Activated CD4-positive, alpha-beta memory T cell treated with anti-CD3 and anti-CD28 coated beads, Interleukin-2, amount 10 ng/mL, durations not matched to agents 7 days and 5 days (primary cell): ENCODE measurements at regions of chr19 and their contacts with region 1.

Region 1: GRCh38 chr19:892243-893050 is 540 bp downstream of the MED16 start:
- DNase-seq: no peak
- H3K4me3 Mint-ChIP-seq: peak overlapping the region; percentile 82
- H3K27ac Mint-ChIP-seq: peak overlapping the region; percentile 78
- H3K4me1 Mint-ChIP-seq: peaks cover 19% of the 10 kb centered on the region
- H3K27me3 Mint-ChIP-seq: no peaks in the 10 kb centered on the region

Region 2: DNA sequence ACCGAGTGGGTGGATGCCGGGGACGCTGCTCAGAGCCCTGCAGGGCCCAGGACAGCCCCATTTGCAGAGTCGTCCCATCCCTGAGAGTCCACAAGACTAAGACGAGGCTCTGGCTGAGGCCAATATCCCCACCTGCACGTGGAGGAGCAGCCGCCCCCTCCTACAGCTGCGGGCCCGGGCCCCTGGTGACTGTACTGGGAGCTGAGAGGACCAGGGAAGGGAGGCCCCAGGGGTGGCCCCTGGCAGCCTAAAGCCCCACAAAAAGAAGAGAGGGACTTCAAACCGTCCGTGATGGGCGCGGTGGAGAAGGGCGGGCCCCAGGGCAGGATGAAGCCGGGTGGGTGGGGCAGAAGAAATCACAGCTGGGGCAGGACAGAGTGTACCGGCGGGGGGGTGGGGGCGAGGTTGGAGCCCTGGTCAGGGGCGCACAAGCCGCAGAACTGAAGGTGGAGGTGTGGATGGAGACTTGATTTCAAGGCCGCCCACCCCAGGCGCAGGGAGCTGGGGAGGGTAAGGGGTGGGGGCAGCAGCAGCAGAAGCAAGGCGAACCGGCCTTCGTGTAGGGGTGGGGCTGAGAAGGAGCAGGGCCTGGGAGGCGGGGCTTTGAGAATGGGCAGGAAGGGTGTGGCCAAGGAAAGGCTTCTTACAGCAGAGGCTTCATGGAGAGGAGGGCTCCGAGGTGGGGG is 20.0 kb before region 1 on chr19:
- CTCF ChIA-PET with region 1: no interaction called
- POLR2A ChIA-PET with region 1: interaction called, 10 read pairs
- DNase-seq: peak; percentile 91
- H3K4me3 Mint-ChIP-seq: peak overlapping the region; percentile 71
- H3K27ac Mint-ChIP-seq: peak overlapping the region; percentile 89
- H3K4me1 Mint-ChIP-seq: peaks cover 11% of the 10 kb centered on the region
- H3K27me3 Mint-ChIP-seq: no peaks in the 10 kb centered on the region